ENCODE measurements at regions of chr16 and their contacts with region 1.

Region 1: GRCh38 chr16:53503270-53503923 is 388 bp upstream of the AKTIP start:
- DNase-seq: peak; percentile 99 to 100
- ATAC-seq: peak; percentile 90 to 98 (median 91)
- H3K4me3 ChIP-seq: peak overlapping the region; percentile 73
- H3K4me3 Mint-ChIP-seq: peak overlapping the region; percentile 92
- H3K27ac ChIP-seq: peak overlapping the region; percentile 87
- H3K27ac Mint-ChIP-seq: peak overlapping the region; percentile 96
- H3K4me1 ChIP-seq: peaks cover 29% of the 10 kb centered on the region
- H3K4me1 Mint-ChIP-seq: peaks cover 41 to 44% of the 10 kb centered on the region in 2 donors
- H3K27me3 ChIP-seq: no peaks in the 10 kb centered on the region
- H3K27me3 Mint-ChIP-seq: no peaks in the 10 kb centered on the region
- CTCF ChIP-seq: no peak

Region 2: GRCh38 chr16:53435066-53435688 is 68.2 kb before region 1 on chr16:
- intact Hi-C with region 1: loop called (anchors 1 kb)
- DNase-seq: peak; percentile 71 to 87
- ATAC-seq: peak; percentile 74 to 88 (median 78)
- H3K4me3 ChIP-seq: peak overlapping the region; percentile 88
- H3K4me3 Mint-ChIP-seq: peak overlapping the region; percentile 93
- H3K27ac ChIP-seq: peak overlapping the region; percentile 94
- H3K27ac Mint-ChIP-seq: peak overlapping the region; percentile 97 to 98
- H3K4me1 ChIP-seq: peaks cover 18% of the 10 kb centered on the region
- H3K4me1 Mint-ChIP-seq: peaks cover 25 to 34% of the 10 kb centered on the region in 2 donors
- H3K27me3 ChIP-seq: no peaks in the 10 kb centered on the region
- H3K27me3 Mint-ChIP-seq: no peaks in the 10 kb centered on the region
- CTCF ChIP-seq: no peak

Region 3: GRCh38 chr16:53518550-53519416 is 15.4 kb after region 1 on chr16:
- intact Hi-C with region 1: loop called (anchors 2 kb)
- DNase-seq: peak; percentile 73 to 90
- ATAC-seq: peak; percentile 84 to 95 (median 91)
- H3K4me3 ChIP-seq: peak overlapping the region; percentile 17
- H3K4me3 Mint-ChIP-seq: peak overlapping the region; percentile 84
- H3K27ac ChIP-seq: peak overlapping the region; percentile 79
- H3K27ac Mint-ChIP-seq: peak overlapping the region; percentile 88 to 93
- H3K4me1 ChIP-seq: peaks cover 57% of the 10 kb centered on the region
- H3K4me1 Mint-ChIP-seq: peaks cover 58 to 65% of the 10 kb centered on the region in 2 donors
- H3K27me3 ChIP-seq: no peaks in the 10 kb centered on the region
- H3K27me3 Mint-ChIP-seq: peaks cover 10% of the 10 kb centered on the region in 2 donors
- CTCF ChIP-seq: no peak

Region 4: DNA sequence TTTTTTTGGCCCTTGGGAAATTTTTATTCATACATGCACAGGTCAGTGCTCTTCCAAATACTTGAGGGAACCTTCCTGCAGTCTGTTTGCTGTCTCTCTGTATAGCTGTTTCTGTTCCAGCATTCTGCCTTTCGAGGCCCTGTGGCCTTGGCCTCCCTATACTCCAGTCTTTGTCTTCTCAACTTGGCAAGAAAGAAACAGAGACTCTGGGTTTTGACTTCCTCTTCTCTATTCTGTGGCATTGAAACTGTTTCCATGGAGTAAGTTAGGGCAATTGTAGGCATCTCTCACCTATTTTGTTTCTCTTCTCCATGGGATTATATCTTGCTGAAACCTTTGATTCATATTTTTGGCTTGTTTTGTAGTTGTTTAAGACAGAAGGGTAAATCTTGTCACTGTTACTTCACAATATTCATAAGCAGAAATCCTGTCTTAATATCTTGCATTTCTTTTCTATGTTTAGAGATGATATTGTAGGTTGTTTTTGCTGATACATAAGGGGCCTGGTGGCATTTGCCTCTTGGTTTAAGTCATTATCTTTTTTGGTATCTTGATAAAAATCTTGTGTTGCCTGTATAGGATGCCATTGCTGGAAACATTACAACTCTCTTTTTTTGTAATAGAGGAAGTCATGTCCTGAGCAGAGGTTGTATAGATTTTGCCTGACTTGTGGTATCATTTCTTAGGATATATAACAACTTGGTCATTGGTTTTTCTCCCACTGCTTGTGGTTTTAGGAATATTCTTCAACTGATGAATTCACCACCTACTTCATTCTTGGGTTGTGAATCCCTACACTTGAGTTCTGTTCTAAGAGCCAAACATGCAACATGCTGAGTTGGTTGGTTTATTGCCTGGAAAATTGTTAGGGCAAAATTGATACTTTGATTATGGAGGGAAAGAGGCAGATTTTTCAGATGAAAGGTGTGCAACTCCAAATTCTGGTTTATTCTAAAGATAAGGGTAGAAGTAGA is 369.1 kb after region 1 on chr16:
- intact Hi-C with region 1: no loop called
- DNase-seq: no peak
- ATAC-seq: no peak
- H3K4me3 ChIP-seq: no peak overlapping the region
- H3K4me3 Mint-ChIP-seq: no peak overlapping the region
- H3K27ac ChIP-seq: no peak overlapping the region
- H3K27ac Mint-ChIP-seq: peak overlapping the region in 1 of 2 donors; percentile 30
- H3K4me1 ChIP-seq: no peaks in the 10 kb centered on the region
- H3K4me1 Mint-ChIP-seq: peaks cover 16% of the 10 kb centered on the region in 2 donors
- H3K27me3 ChIP-seq: no peaks in the 10 kb centered on the region
- H3K27me3 Mint-ChIP-seq: no peaks in the 10 kb centered on the region
- CTCF ChIP-seq: no peak